IMR-90 (cell line): ENCODE measurements at regions of chr7 and their contacts with region 1.

Region 1: GRCh38 chr7:114678116-114678515 is 243.8 kb upstream of the MDFIC start:
- DNase-seq: no peak
- ATAC-seq: no peak
- H3K4me3 ChIP-seq: no peak overlapping the region
- H3K27ac ChIP-seq: no peak overlapping the region
- H3K4me1 ChIP-seq: no peaks in the 10 kb centered on the region
- H3K27me3 ChIP-seq: no peaks in the 10 kb centered on the region
- CTCF ChIP-seq: no peak
- POLR2A ChIP-seq: no peak
- RAD21 ChIP-seq: no peak

Region 2: DNA sequence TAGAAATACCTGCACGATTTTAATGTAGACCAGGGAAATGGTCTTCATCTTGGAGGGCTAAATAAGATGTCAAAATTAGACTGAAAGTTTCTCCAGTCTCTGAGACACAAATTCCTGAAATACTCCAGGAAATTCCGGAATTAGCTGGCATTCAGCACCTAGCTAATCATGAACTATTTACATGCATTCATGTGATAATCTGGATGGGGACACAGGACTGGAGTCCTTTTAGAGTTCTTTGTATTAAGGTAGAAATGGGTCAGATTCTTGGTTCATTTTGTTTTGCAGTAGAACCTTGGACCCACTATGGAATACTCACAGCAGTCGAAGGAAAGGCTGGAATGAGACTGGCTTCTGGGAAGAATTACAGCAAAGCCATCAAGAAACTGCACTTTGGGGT is 178.5 kb after region 1 on chr7:
- CTCF ChIA-PET with region 1: no interaction called
- POLR2A ChIA-PET with region 1: no interaction called
- dilution Hi-C with region 1: no loop called
- in situ Hi-C with region 1: no loop called
- intact Hi-C with region 1: loop called (anchors 5 kb)
- DNase-seq: peak; percentile 10
- ATAC-seq: no peak
- H3K4me3 ChIP-seq: no peak overlapping the region
- H3K27ac ChIP-seq: no peak overlapping the region
- H3K4me1 ChIP-seq: no peaks in the 10 kb centered on the region; the same call in 1 of the 2 replicates
- H3K27me3 ChIP-seq: no peaks in the 10 kb centered on the region
- CTCF ChIP-seq: no peak
- POLR2A ChIP-seq: no peak
- RAD21 ChIP-seq: no peak

Region 3: GRCh38 chr7:114889646-114890285 is 211.7 kb after region 1 on chr7:
- CTCF ChIA-PET with region 1: no interaction called
- POLR2A ChIA-PET with region 1: no interaction called
- dilution Hi-C with region 1: no loop called
- in situ Hi-C with region 1: no loop called
- intact Hi-C with region 1: no loop called
- DNase-seq: peak; percentile 99
- ATAC-seq: peak; percentile 98
- H3K4me3 ChIP-seq: no peak overlapping the region
- H3K27ac ChIP-seq: no peak overlapping the region
- H3K4me1 ChIP-seq: peaks cover 3% of the 10 kb centered on the region
- H3K27me3 ChIP-seq: no peaks in the 10 kb centered on the region
- CTCF ChIP-seq: no peak
- POLR2A ChIP-seq: no peak
- RAD21 ChIP-seq: no peak

Region 4: DNA sequence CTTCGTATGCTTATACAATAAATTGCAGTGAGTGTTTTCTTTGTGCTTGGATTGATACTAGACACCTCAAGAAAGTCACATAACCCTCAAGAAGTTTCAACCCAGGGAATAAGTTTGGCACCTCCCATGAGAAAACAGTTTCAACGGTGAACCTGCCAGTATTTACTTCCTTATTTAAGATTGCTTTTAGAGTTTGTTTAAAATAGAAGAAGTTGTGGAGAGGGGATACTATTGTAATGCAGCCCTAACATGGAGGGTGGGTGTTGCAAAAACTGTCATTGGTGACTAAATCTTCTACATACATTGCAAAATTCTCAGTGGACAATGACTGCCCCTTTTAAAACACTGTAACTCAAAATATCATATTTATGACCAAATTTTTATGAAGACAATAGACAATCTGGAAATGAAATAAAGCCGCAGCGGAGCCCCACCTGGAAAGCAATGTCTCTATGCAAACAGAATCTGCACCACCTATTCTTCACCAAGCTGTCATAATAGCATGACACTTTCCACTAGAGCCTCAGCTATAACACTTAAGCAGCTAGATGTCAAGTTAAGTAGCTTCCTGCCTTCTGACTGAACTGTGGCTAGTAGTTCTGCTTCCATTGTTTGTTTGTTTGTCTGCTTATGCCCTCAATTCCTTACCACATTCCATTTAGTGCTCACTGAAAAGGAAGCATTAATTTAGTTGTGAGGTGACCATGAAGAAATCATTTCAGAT is 341.9 kb after region 1 on chr7:
- CTCF ChIA-PET with region 1: no interaction called
- POLR2A ChIA-PET with region 1: no interaction called
- dilution Hi-C with region 1: no loop called
- in situ Hi-C with region 1: no loop called
- intact Hi-C with region 1: no loop called
- DNase-seq: no peak
- ATAC-seq: no peak
- H3K4me3 ChIP-seq: no peak overlapping the region
- H3K27ac ChIP-seq: no peak overlapping the region
- H3K4me1 ChIP-seq: peaks cover 5% of the 10 kb centered on the region
- H3K27me3 ChIP-seq: no peaks in the 10 kb centered on the region
- CTCF ChIP-seq: no peak
- POLR2A ChIP-seq: no peak
- RAD21 ChIP-seq: no peak